Vagina (tissue), 2 donors: ENCODE measurements at regions of chr9 and their contacts with region 1.

Region 1: GRCh38 chr9:82234160-82234943 is 245.8 kb downstream of the SPATA31D1 start:
- DNase-seq: no peak
- H3K4me3 ChIP-seq: no peak overlapping the region
- H3K27ac ChIP-seq: no peak overlapping the region
- H3K4me1 ChIP-seq: no peaks in the 10 kb centered on the region
- H3K27me3 ChIP-seq: no peaks in the 10 kb centered on the region
- CTCF ChIP-seq: no peak
- POLR2A ChIP-seq: no peak

Region 2: GRCh38 chr9:81445331-81445921 is 788.9 kb before region 1 on chr9:
- intact Hi-C with region 1: loop called (anchors 5 kb)
- DNase-seq: no peak
- H3K4me3 ChIP-seq: no peak overlapping the region
- H3K27ac ChIP-seq: no peak overlapping the region
- H3K4me1 ChIP-seq: no peaks in the 10 kb centered on the region
- H3K27me3 ChIP-seq: no peaks in the 10 kb centered on the region
- CTCF ChIP-seq: no peak
- POLR2A ChIP-seq: no peak

Region 3: DNA sequence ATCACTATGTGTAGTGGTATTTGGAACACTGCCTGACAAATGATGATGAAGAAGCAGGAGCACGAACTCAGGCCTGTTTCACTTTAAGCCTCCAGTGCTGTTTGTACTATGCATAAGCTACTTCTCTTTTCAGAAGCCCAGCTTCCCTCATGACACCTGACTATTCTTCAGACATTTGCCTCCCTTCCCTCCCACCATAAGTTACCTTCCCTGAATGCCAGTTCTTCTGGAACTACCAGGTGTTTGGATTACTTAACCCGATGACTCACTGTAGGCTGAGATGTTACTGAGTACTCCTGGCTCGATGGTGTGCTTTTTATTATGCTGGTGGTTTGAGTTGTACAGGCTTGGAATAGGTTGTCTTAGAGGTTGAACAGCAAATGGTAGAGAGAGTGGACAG is 65.8 kb before region 1 on chr9:
- intact Hi-C with region 1: no loop called
- DNase-seq: no peak
- H3K4me3 ChIP-seq: no peak overlapping the region
- H3K27ac ChIP-seq: no peak overlapping the region
- H3K4me1 ChIP-seq: peaks cover 14% of the 10 kb centered on the region
- H3K27me3 ChIP-seq: no peaks in the 10 kb centered on the region
- CTCF ChIP-seq: no peak
- POLR2A ChIP-seq: no peak

Region 4: DNA sequence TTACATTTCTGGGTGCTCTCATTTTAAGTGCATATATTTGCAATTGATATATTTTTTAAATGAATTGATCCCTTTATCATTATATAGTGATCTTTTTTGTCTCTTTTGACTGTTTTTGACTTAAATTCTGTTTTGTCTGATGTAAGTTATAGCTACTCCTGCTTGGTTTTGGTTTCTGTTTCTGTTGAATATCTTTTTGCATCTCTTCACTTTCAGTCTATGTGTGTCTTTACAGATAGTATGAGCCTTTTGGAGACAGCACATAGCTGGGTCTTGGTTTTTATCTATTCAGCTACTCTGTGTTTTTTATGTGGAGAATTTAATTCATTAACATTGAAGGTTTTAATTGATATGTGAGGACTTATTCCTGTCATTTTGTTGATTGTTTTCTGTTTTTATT is 65.5 kb after region 1 on chr9:
- intact Hi-C with region 1: no loop called
- DNase-seq: no peak
- H3K4me3 ChIP-seq: no peak overlapping the region
- H3K27ac ChIP-seq: no peak overlapping the region
- H3K4me1 ChIP-seq: no peaks in the 10 kb centered on the region
- H3K27me3 ChIP-seq: no peaks in the 10 kb centered on the region
- CTCF ChIP-seq: no peak
- POLR2A ChIP-seq: no peak